IMR-90 (cell line): ENCODE measurements at regions of chr16 and their contacts with region 1.

Region 1: GRCh38 chr16:56513972-56514371 is 5.9 kb downstream of the BBS2 start:
- DNase-seq: peak; percentile 74
- ATAC-seq: peak; percentile 89
- H3K4me3 ChIP-seq: no peak overlapping the region
- H3K27ac ChIP-seq: no peak overlapping the region
- H3K4me1 ChIP-seq: no peaks in the 10 kb centered on the region; the same call in 1 of the 2 replicates
- H3K27me3 ChIP-seq: no peaks in the 10 kb centered on the region
- CTCF ChIP-seq: peak; percentile 74
- POLR2A ChIP-seq: no peak
- RAD21 ChIP-seq: peak; percentile 76

Region 2: GRCh38 chr16:56600398-56600999 is 86.5 kb after region 1 on chr16:
- CTCF ChIA-PET with region 1: interaction called, 8 read pairs
- POLR2A ChIA-PET with region 1: no interaction called
- dilution Hi-C with region 1: no loop called
- in situ Hi-C with region 1: loop called (anchors 5 kb)
- intact Hi-C with region 1: loop called (anchors 1 kb)
- DNase-seq: peak; percentile 66
- ATAC-seq: peak; percentile 93
- H3K4me3 ChIP-seq: no peak overlapping the region
- H3K27ac ChIP-seq: no peak overlapping the region
- H3K4me1 ChIP-seq: no peaks in the 10 kb centered on the region
- H3K27me3 ChIP-seq: no peaks in the 10 kb centered on the region; the same call in 1 of the 2 replicates
- CTCF ChIP-seq: peak; percentile 70
- POLR2A ChIP-seq: no peak
- RAD21 ChIP-seq: peak; percentile 63

Region 3: GRCh38 chr16:57284208-57284951 is 770.4 kb after region 1 on chr16 and contains the start of gene PLLP:
- CTCF ChIA-PET with region 1: no interaction called
- POLR2A ChIA-PET with region 1: no interaction called
- dilution Hi-C with region 1: no loop called
- in situ Hi-C with region 1: no loop called
- intact Hi-C with region 1: no loop called
- DNase-seq: peak; percentile 8
- ATAC-seq: peak; percentile 77
- H3K4me3 ChIP-seq: peak within 1 kb of the TSS; percentile 46
- H3K27ac ChIP-seq: no peak within 1 kb of the TSS
- H3K4me1 ChIP-seq: no peaks in the 10 kb centered on the region
- H3K27me3 ChIP-seq: peaks cover 54% of the 10 kb centered on the region
- CTCF ChIP-seq: no peak
- POLR2A ChIP-seq: no peak
- RAD21 ChIP-seq: peak; percentile 4; the same call in 1 of the 2 replicates
- total RNA-seq, gene PLLP: not detected in 2 replicates